ENCODE measurements at regions of chr3 and their contacts with region 1.

Region 1: DNA sequence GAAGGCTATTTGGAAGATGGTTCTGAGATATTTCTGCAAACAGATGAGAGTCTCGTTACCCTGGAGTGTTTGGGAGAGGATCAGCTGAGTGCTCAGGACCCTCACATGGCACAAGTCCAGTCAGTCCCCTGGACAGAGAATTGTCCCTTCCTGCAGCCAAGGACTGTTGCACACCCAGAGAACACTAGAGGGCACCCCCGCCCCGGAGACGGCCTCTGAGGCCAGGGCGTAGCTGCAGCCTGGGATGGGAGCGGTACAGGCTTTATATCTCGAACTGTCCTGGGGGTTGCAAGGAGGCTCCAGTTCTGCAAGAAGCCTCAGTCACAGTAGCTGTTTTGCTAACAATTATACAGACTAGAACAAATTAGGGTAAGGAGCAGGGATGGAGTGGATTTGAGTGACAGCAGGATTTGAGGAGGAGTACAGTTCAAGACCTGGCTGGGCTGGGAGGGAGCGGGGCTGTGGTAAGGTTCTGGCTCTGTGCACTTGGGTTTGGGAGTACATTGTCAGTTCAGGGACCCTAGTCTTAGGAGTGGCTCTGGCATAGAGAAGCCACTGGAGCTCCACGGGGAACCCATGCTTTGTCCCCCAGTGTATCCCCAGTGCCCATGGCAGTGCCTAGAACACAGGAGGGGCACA is 67.6 kb upstream of the HACD2 start:
- DNase-seq: no peak
- ATAC-seq: peak; percentile 99
- H3K4me3 ChIP-seq: no peak overlapping the region
- H3K27ac ChIP-seq: no peak overlapping the region
- H3K4me1 ChIP-seq: no peaks in the 10 kb centered on the region
- H3K27me3 ChIP-seq: no peaks in the 10 kb centered on the region; a peak in 2 of 4 replicates
- CTCF ChIP-seq: peak; percentile 80 to 92 (median 89)
- EP300 ChIP-seq: no peak
- POLR2A ChIP-seq: no peak
- RAD21 ChIP-seq: peak; percentile 97

Region 2: GRCh38 chr3:123629762-123630077 is 22.7 kb before region 1 on chr3:
- CTCF ChIA-PET with region 1: interaction called, 11 read pairs
- POLR2A ChIA-PET with region 1: no interaction called
- RAD21 ChIA-PET with region 1: no interaction called
- SMC1A ChIA-PET with region 1: no interaction called
- in situ Hi-C with region 1: no loop called
- intact Hi-C with region 1: no loop called
- DNase-seq: no peak
- ATAC-seq: no peak
- H3K4me3 ChIP-seq: no peak overlapping the region
- H3K27ac ChIP-seq: no peak overlapping the region
- H3K4me1 ChIP-seq: no peaks in the 10 kb centered on the region
- H3K27me3 ChIP-seq: no peaks in the 10 kb centered on the region
- CTCF ChIP-seq: no peak
- EP300 ChIP-seq: no peak
- POLR2A ChIP-seq: no peak
- RAD21 ChIP-seq: no peak

Region 3: DNA sequence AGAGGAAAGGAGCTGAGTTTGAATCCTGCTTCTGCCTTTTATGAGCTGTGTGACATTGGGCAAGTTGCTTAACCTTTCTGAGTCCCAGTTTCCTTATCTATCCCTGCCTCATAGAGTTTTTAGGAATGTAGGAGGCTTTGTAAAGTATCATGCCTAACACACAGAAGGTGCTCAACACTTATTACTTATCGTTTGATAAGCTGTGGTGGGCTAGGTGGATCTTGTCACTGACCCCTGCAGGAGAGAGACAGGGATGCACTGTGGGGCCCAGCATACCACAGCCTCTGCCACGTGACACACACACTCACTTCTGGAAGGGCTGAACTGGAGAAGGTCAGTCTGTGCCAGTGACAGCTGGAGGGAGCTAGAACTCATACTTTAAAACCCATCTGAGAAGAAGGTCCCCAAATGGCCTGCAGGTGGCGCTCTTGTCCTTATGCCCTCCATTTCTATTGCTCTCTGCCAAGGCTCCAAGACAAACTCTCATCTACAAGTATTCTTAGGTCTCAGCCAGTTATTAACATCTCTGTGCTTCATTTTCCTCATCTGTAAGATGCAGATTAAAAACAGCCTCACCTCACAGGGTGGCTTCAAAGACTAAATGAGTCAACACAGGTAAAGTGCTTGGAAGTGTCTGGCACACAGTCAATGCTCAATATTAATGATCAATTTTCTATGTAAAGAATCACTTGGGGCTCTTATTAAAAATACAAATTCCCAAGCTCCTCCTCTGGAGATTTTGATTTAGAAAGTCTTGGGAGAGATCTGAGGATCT is 10.1 kb before region 1 on chr3:
- CTCF ChIA-PET with region 1: interaction called, 23 read pairs
- POLR2A ChIA-PET with region 1: interaction called, 3 read pairs
- RAD21 ChIA-PET with region 1: no interaction called
- SMC1A ChIA-PET with region 1: interaction called, 4 read pairs
- in situ Hi-C with region 1: no loop called
- intact Hi-C with region 1: no loop called
- DNase-seq: peak; percentile 34
- ATAC-seq: peak; percentile 99
- H3K4me3 ChIP-seq: no peak overlapping the region
- H3K27ac ChIP-seq: no peak overlapping the region
- H3K4me1 ChIP-seq: no peaks in the 10 kb centered on the region
- H3K27me3 ChIP-seq: no peaks in the 10 kb centered on the region
- CTCF ChIP-seq: peak; percentile 80 to 89 (median 85)
- EP300 ChIP-seq: no peak
- POLR2A ChIP-seq: no peak
- RAD21 ChIP-seq: peak; percentile 54

Region 4: GRCh38 chr3:123700791-123701722 is 48.6 kb after region 1 on chr3:
- CTCF ChIA-PET with region 1: interaction called, 14 read pairs
- POLR2A ChIA-PET with region 1: no interaction called
- RAD21 ChIA-PET with region 1: interaction called, 5 read pairs
- SMC1A ChIA-PET with region 1: no interaction called
- in situ Hi-C with region 1: no loop called
- intact Hi-C with region 1: loop called (anchors 1 kb)
- DNase-seq: no peak
- ATAC-seq: no peak
- H3K4me3 ChIP-seq: no peak overlapping the region
- H3K27ac ChIP-seq: no peak overlapping the region
- H3K4me1 ChIP-seq: peaks cover 2% of the 10 kb centered on the region
- H3K27me3 ChIP-seq: no peaks in the 10 kb centered on the region; a peak in 2 of 4 replicates
- CTCF ChIP-seq: no peak
- EP300 ChIP-seq: no peak
- POLR2A ChIP-seq: no peak
- RAD21 ChIP-seq: no peak

Region 5: GRCh38 chr3:123716411-123716810 is 63.9 kb after region 1 on chr3:
- CTCF ChIA-PET with region 1: interaction called, 17 read pairs
- POLR2A ChIA-PET with region 1: no interaction called
- RAD21 ChIA-PET with region 1: interaction called, 3 read pairs
- SMC1A ChIA-PET with region 1: no interaction called
- in situ Hi-C with region 1: no loop called
- intact Hi-C with region 1: loop called (anchors 1 kb)
- DNase-seq: no peak
- ATAC-seq: no peak
- H3K4me3 ChIP-seq: no peak overlapping the region
- H3K27ac ChIP-seq: no peak overlapping the region
- H3K4me1 ChIP-seq: no peaks in the 10 kb centered on the region
- H3K27me3 ChIP-seq: no peaks in the 10 kb centered on the region; a peak in 1 of 4 replicates
- CTCF ChIP-seq: no peak
- EP300 ChIP-seq: no peak
- POLR2A ChIP-seq: no peak
- RAD21 ChIP-seq: no peak

Region 6: DNA sequence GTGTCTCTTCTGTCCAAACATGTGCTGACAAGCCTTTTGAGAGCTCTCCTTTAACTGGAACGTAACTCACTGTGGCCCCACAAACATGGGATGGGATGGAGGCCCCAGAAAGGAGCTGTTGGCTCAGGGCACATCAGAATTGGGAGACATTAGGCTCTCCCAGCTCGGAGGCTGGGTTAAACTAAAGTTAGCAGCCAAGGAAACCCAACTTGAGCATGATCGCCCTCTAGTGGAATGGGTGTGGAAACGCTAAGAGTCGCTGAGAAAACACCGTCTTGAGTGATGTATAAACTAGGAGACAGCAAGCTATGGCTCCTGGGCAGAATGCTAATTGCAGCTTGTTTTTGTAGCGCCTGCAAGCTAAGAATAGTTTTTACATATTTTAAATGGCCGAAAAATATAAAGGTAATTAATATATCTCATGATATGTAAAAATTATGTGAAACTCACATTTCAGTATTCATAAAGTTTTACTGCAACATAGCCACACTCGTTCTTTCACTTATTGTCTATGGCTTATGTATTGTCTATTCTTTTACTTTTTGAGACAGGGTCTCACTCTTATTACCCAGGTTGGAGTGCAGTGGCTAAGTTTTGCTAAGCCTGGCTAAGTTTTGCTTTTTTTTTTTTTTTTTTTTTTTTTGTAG is 71.2 kb after region 1 on chr3:
- CTCF ChIA-PET with region 1: interaction called, 39 read pairs
- POLR2A ChIA-PET with region 1: no interaction called
- RAD21 ChIA-PET with region 1: interaction called, 18 read pairs
- SMC1A ChIA-PET with region 1: interaction called, 18 read pairs
- in situ Hi-C with region 1: no loop called
- intact Hi-C with region 1: loop called (anchors 1 kb)
- DNase-seq: peak; percentile 27
- ATAC-seq: peak; percentile 90
- H3K4me3 ChIP-seq: no peak overlapping the region
- H3K27ac ChIP-seq: no peak overlapping the region
- H3K4me1 ChIP-seq: no peaks in the 10 kb centered on the region
- H3K27me3 ChIP-seq: no peaks in the 10 kb centered on the region; a peak in 1 of 4 replicates
- CTCF ChIP-seq: peak; percentile 81 to 89 (median 87)
- EP300 ChIP-seq: no peak
- POLR2A ChIP-seq: no peak
- RAD21 ChIP-seq: peak; percentile 67

Region 7: DNA sequence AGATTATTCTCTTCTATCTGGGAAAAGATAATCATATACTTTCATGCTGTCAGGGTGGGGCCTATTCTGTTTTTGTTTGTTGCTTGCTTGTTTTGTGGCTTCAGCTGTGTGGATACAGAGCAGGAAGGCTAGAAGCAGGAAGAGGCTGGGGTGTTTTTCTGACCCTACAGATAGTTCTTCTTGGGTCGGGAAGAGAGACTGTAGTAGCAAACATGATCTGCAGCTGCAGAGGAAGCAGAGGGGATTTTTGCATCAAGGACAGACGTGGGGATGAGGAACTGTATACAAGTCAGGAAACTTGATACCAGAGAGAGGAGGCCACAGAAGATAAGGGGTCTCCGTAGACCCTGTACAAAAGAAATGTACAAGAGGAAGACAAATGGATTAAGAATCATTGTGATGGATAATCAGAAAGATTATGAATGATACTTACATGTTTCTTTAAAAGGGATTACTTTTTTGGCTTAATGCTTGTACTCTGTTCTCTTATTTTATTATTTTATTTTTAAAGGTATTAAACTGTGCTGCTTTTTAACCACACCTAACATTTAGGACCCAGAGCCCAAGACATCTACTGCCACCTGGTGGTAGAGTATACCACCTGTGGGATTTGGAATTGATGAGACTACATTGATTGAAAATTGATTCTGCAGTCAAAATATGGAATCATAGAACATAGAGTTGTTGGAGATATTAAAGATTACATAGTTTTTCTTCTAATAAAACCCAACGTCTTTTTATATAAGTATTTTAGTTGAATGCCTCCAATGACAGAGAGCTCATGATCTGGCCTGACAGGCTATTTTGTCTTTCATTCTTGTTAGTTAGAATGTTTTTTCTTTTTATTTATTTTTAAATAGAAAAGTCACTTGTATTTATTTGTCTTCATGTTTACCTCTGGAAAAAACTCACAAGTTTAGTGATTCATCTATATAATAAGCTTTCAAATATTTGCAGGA is 426.8 kb after region 1 on chr3:
- CTCF ChIA-PET with region 1: no interaction called
- POLR2A ChIA-PET with region 1: no interaction called
- RAD21 ChIA-PET with region 1: no interaction called
- SMC1A ChIA-PET with region 1: no interaction called
- in situ Hi-C with region 1: no loop called
- intact Hi-C with region 1: loop called (anchors 5 kb)
- DNase-seq: no peak
- ATAC-seq: peak; percentile 64; the same call in 2 of the 3 replicates
- H3K4me3 ChIP-seq: no peak overlapping the region
- H3K27ac ChIP-seq: no peak overlapping the region
- H3K4me1 ChIP-seq: no peaks in the 10 kb centered on the region
- H3K27me3 ChIP-seq: peaks cover 0 to 5% of the 10 kb centered on the region in 2 experiments; a peak in 2 of 4 replicates
- CTCF ChIP-seq: peak; percentile 53 to 63 (median 59)
- EP300 ChIP-seq: no peak
- POLR2A ChIP-seq: no peak
- RAD21 ChIP-seq: peak; percentile 70

Measured in GM12878 (cell line).